Activated CD8-positive, alpha-beta T cell treated with anti-CD3 and anti-CD28 coated beads, Interleukin-2, amount 10 ng/mL, durations not matched to agents 7 days and 5 days (primary cell): ENCODE measurements at regions of chr10 and their contacts with region 1.

Region 1: DNA sequence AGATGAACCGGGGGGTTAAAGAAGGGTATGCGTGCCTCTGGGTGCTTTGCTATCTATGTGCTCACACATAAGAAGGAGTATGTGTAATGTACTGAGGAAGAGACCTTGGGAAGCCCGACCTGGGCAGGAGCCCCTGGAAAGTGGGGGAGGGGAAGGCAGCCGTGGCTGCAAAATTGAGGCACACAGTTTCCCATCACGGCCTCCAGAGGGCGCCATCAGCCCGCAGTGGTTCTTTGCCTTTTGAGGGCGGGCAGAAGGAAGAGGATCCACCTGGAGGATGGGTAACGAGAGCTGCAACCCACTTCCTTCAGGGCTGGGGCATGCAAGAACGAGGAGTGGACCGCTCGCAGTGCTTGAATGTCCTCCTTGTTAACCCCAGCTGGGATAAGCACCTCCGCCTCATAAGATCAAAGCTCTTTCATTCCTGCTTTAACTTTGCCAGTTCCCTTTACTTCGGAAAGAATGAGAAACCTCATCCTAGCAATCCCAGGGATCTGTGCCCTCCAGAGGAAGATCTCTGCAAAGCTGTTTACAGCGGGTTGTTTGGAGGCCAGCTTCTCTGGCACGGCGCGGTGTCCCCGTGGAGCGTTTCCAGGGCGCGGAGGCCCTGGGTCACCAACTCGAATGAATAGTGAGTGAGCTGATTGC is 77.9 kb downstream of the PCGF5 start:
- DNase-seq: peak; percentile 87
- ATAC-seq: peak; percentile 96
- H3K4me3 Mint-ChIP-seq: peak overlapping the region; percentile 61
- H3K27ac Mint-ChIP-seq: peak overlapping the region; percentile 10
- H3K4me1 Mint-ChIP-seq: peaks cover 17% of the 10 kb centered on the region
- H3K27me3 Mint-ChIP-seq: peaks cover 21% of the 10 kb centered on the region

Region 2: GRCh38 chr10:91194497-91195179 is 103.7 kb before region 1 on chr10:
- CTCF ChIA-PET with region 1: no interaction called
- POLR2A ChIA-PET with region 1: no interaction called
- DNase-seq: no peak
- ATAC-seq: peak; percentile 13
- H3K4me3 Mint-ChIP-seq: no peak overlapping the region
- H3K27ac Mint-ChIP-seq: peak overlapping the region; percentile 14
- H3K4me1 Mint-ChIP-seq: peaks cover 61% of the 10 kb centered on the region
- H3K27me3 Mint-ChIP-seq: no peaks in the 10 kb centered on the region

Region 3: GRCh38 chr10:91287276-91287675 is 11.1 kb before region 1 on chr10:
- CTCF ChIA-PET with region 1: interaction called, 33 read pairs
- POLR2A ChIA-PET with region 1: no interaction called
- DNase-seq: no peak
- ATAC-seq: no peak
- H3K4me3 Mint-ChIP-seq: no peak overlapping the region
- H3K27ac Mint-ChIP-seq: no peak overlapping the region
- H3K4me1 Mint-ChIP-seq: no peaks in the 10 kb centered on the region
- H3K27me3 Mint-ChIP-seq: no peaks in the 10 kb centered on the region

Region 4: GRCh38 chr10:91378061-91378460 is 79.7 kb after region 1 on chr10:
- CTCF ChIA-PET with region 1: interaction called, 10 read pairs
- POLR2A ChIA-PET with region 1: no interaction called
- DNase-seq: no peak
- ATAC-seq: no peak
- H3K4me3 Mint-ChIP-seq: no peak overlapping the region
- H3K27ac Mint-ChIP-seq: no peak overlapping the region
- H3K4me1 Mint-ChIP-seq: peaks cover 6% of the 10 kb centered on the region
- H3K27me3 Mint-ChIP-seq: peaks cover 2% of the 10 kb centered on the region

Region 5: DNA sequence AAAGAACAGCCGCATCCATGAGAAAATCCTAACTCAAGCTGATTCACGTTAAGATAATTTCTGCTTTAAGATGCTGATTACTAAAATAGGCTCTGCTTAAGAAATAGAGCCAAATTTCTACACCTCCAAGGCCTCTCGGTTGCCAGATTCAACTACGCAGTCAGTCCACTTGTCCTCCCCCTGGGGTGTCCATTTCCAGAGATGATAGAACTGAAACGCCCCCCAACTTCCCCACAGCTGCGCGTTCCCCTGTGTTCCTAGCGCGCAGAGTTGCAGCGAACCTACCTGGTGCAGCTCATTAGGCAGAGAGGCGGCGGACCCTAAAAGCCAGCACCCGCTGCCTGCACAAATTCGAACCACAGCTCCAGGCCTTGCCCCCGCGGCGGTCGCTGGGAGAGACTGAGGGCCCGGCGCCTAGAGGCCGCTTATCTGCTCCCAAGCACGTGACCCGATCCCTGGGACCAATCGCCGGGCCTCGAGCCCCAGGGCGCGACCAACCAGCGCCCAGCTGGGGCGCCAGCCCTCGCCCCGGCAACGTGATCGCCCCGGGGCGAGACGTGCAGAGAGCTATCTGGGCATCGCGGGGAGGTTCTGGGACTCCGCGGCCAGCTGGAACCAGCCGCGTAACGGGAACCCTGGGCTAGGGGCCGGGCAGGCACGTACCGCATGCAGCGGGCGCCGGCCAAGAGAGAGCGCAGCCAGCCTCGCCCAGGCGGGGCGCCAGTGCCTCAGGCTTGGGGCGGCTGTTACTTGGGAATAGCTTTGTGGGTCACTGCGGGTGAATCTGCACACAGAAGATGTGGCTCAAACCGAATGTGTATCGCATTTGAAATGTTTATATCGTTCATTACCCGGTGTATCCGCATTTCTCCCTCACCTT is 334.6 kb after region 1 on chr10 and contains the start of gene PPP1R3C:
- CTCF ChIA-PET with region 1: interaction called, 99 read pairs
- POLR2A ChIA-PET with region 1: no interaction called
- DNase-seq: peak; percentile 51
- ATAC-seq: peak; percentile 87
- H3K4me3 Mint-ChIP-seq: peak within 1 kb of the TSS; percentile 67
- H3K27ac Mint-ChIP-seq: no peak within 1 kb of the TSS
- H3K4me1 Mint-ChIP-seq: peaks cover 8% of the 10 kb centered on the region
- H3K27me3 Mint-ChIP-seq: peaks cover 46% of the 10 kb centered on the region
- total RNA-seq, gene PPP1R3C: not detected